Activated CD8-positive, alpha-beta T cell treated with anti-CD3 and anti-CD28 coated beads for 36 hours (primary cell): ENCODE measurements at regions of chr12 and their contacts with region 1.

Region 1: GRCh38 chr12:56117778-56118687 is at the start of gene ZC3H10:
- DNase-seq: peak; percentile 99
- ATAC-seq: peak; percentile 86
- H3K4me3 Mint-ChIP-seq: peak within 1 kb of the TSS; percentile 89
- H3K27ac Mint-ChIP-seq: peak within 1 kb of the TSS; percentile 100
- H3K4me1 Mint-ChIP-seq: peaks cover 23% of the 10 kb centered on the region
- H3K27me3 Mint-ChIP-seq: no peaks in the 10 kb centered on the region
- CTCF ChIP-seq: no peak
- total RNA-seq, gene ZC3H10: 6.8 to 7.2 TPM

Region 2: GRCh38 chr12:56104109-56104814 is 13.8 kb before region 1 on chr12 and contains the start of gene PA2G4:
- CTCF ChIA-PET with region 1: interaction called, 26 read pairs
- POLR2A ChIA-PET with region 1: interaction called, 162 read pairs
- intact Hi-C with region 1: no loop called
- DNase-seq: peak; percentile 100
- ATAC-seq: peak; percentile 94
- H3K4me3 Mint-ChIP-seq: peak within 1 kb of the TSS; percentile 95
- H3K27ac Mint-ChIP-seq: peak within 1 kb of the TSS; percentile 99
- H3K4me1 Mint-ChIP-seq: peaks cover 47% of the 10 kb centered on the region
- H3K27me3 Mint-ChIP-seq: no peaks in the 10 kb centered on the region
- CTCF ChIP-seq: no peak
- total RNA-seq, gene PA2G4: 447 to 455 TPM

Region 3: GRCh38 chr12:56152318-56153033 is 34.4 kb after region 1 on chr12 and contains the start of gene MYL6B:
- CTCF ChIA-PET with region 1: interaction called, 36 read pairs
- POLR2A ChIA-PET with region 1: interaction called, 19 read pairs
- intact Hi-C with region 1: loop called (anchors 5 kb)
- DNase-seq: peak; percentile 98
- ATAC-seq: peak; percentile 88
- H3K4me3 Mint-ChIP-seq: peak within 1 kb of the TSS; percentile 92
- H3K27ac Mint-ChIP-seq: peak within 1 kb of the TSS; percentile 100
- H3K4me1 Mint-ChIP-seq: peaks cover 36% of the 10 kb centered on the region
- H3K27me3 Mint-ChIP-seq: no peaks in the 10 kb centered on the region
- CTCF ChIP-seq: no peak
- total RNA-seq, gene MYL6B: 60.3 to 66.9 TPM

Region 4: DNA sequence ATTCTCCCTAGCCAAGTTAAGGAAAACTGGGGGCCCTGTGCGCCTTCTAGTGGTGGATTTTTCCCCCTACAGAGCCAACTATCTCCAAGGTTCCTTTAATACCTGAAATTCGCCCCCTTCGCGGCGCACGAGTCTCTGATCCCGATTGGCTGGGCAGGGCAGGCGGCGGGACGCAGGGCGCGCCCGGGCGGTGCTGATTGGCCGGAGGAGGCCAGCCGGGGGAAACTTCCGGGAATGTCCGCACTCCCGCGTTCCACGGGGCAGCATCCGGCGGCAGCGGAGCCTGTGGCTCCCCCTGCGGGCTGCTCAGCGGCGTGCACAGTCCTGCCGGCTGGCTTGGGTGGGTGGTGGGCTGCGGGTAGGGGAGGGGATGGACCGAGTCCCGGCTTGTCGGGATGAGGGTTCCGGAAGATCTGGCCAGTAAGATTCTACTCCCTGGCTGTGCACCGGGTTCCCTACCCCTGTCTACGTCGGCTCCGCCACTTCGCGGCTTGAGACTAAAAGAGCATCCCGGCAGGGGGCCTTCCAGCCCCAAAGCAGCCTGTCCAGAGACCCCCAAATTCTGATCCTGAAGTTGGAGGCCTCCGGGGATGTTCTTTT is 106.2 kb after region 1 on chr12 and contains the start of gene NABP2:
- CTCF ChIA-PET with region 1: interaction called, 13 read pairs
- POLR2A ChIA-PET with region 1: interaction called, 22 read pairs
- intact Hi-C with region 1: loop called (anchors 2 kb)
- DNase-seq: peak; percentile 97
- ATAC-seq: peak; percentile 81
- H3K4me3 Mint-ChIP-seq: peak within 1 kb of the TSS; percentile 98
- H3K27ac Mint-ChIP-seq: peak within 1 kb of the TSS; percentile 87
- H3K4me1 Mint-ChIP-seq: peaks cover 27% of the 10 kb centered on the region
- H3K27me3 Mint-ChIP-seq: no peaks in the 10 kb centered on the region
- CTCF ChIP-seq: peak; percentile 89
- total RNA-seq, gene NABP2: 58.7 to 60.2 TPM

Region 5: GRCh38 chr12:56437430-56438176 is 319.6 kb after region 1 on chr12:
- CTCF ChIA-PET with region 1: no interaction called
- POLR2A ChIA-PET with region 1: no interaction called
- intact Hi-C with region 1: no loop called
- DNase-seq: no peak
- ATAC-seq: no peak
- H3K4me3 Mint-ChIP-seq: no peak overlapping the region
- H3K27ac Mint-ChIP-seq: no peak overlapping the region
- H3K4me1 Mint-ChIP-seq: peaks cover 3% of the 10 kb centered on the region
- H3K27me3 Mint-ChIP-seq: no peaks in the 10 kb centered on the region
- CTCF ChIP-seq: no peak